ENCODE measurements at regions of chrX and their contacts with region 1.

Region 1: GRCh38 chrX:43836435-43837184 is 45.6 kb downstream of the MAOB start:
- DNase-seq: no peak
- ATAC-seq: no peak
- H3K4me3 Mint-ChIP-seq: no peak overlapping the region
- H3K27ac Mint-ChIP-seq: no peak overlapping the region
- H3K4me1 Mint-ChIP-seq: no peaks in the 10 kb centered on the region
- H3K27me3 Mint-ChIP-seq: peaks cover 4% of the 10 kb centered on the region
- CTCF ChIP-seq: no peak

Region 2: GRCh38 chrX:43969504-43970501 is 133.2 kb after region 1 on chrX:
- CTCF ChIA-PET with region 1: no interaction called
- POLR2A ChIA-PET with region 1: no interaction called
- intact Hi-C with region 1: no loop called
- DNase-seq: no peak
- ATAC-seq: no peak
- H3K4me3 Mint-ChIP-seq: no peak overlapping the region
- H3K27ac Mint-ChIP-seq: no peak overlapping the region
- H3K4me1 Mint-ChIP-seq: peaks cover 16% of the 10 kb centered on the region
- H3K27me3 Mint-ChIP-seq: peaks cover 15% of the 10 kb centered on the region
- CTCF ChIP-seq: no peak

Region 3: DNA sequence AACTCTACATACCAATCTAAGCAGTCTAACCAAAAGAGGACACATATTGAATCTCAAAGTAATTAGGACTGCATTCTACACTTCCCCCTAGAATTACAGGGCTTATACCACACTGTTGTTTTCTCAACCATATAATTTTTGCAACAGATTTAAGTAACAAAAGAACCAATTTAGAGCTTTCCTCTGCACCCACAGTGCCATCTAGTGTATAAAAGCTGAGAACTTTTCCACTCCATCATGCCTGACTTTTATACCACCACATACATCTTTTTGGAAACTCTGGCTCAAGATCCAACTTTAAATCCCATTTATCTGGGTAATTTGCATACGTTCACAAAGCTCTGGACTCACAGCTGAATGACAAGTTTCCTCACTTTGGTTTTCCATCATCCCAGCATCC is 407.4 kb after region 1 on chrX:
- CTCF ChIA-PET with region 1: interaction called, 3 read pairs
- POLR2A ChIA-PET with region 1: no interaction called
- intact Hi-C with region 1: loop called (anchors 2 kb)
- DNase-seq: no peak
- ATAC-seq: no peak
- H3K4me3 Mint-ChIP-seq: no peak overlapping the region
- H3K27ac Mint-ChIP-seq: no peak overlapping the region
- H3K4me1 Mint-ChIP-seq: peaks cover 5% of the 10 kb centered on the region
- H3K27me3 Mint-ChIP-seq: no peaks in the 10 kb centered on the region
- CTCF ChIP-seq: no peak

Region 4: GRCh38 chrX:45186643-45187026 is 1350.0 kb after region 1 on chrX:
- CTCF ChIA-PET with region 1: interaction called, 3 read pairs
- POLR2A ChIA-PET with region 1: no interaction called
- intact Hi-C with region 1: loop called (anchors 2 kb)
- DNase-seq: no peak
- ATAC-seq: no peak
- H3K4me3 Mint-ChIP-seq: peak overlapping the region; percentile 83
- H3K27ac Mint-ChIP-seq: no peak overlapping the region
- H3K4me1 Mint-ChIP-seq: peaks cover 17% of the 10 kb centered on the region
- H3K27me3 Mint-ChIP-seq: no peaks in the 10 kb centered on the region
- CTCF ChIP-seq: peak; percentile 21

Measured in activated B cell treated with CpG ODN at 0.5 μM for 24 hours (primary cell).